A673 (cell line): ENCODE measurements at regions of chr2 and their contacts with region 1.

Region 1: GRCh38 chr2:159615140-159615951 is 1.0 kb downstream of the BAZ2B start:
- DNase-seq: peak; percentile 95
- H3K4me3 ChIP-seq: peak overlapping the region; percentile 83
- H3K27ac ChIP-seq: peak overlapping the region; percentile 100
- H3K4me1 ChIP-seq: peaks cover 50% of the 10 kb centered on the region
- H3K27me3 ChIP-seq: no peaks in the 10 kb centered on the region
- CTCF ChIP-seq: no peak

Region 2: DNA sequence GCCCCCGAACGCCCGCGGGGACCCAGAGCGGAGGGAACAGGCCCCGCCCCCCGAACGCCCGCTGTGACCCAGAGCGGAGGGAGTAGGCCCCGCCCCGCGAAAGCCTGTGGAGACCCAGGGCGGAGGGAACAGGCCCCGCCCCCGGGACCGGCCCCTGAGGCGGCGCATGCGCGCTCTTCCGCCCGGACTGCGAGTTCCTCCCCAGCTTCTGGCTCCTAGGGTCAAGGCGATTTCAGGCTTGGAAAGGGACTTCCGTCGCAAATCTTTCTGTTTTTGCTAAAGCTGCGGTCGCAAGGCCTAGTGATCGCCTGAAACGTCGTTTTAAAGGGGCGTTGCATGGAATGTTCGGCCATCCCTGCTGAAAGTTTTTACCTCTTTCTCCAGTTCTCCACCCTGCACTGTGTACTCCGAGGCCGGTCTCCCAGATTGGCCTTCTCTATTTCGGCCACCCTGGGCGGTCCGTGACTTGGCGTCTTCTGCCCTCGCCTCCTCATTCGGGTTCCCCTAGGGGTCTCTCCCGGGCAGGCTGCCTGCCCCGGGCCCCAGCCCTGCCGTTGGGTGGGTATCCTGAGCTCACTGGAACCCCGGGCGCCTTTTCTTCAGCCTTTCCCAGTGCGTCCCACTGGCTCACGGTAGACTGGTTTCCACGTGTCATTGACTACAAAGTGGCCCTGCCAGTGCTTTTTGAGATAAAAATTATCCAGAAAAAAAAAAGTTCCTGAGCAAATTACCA is 328.5 kb before region 1 on chr2:
- CTCF ChIA-PET with region 1: no interaction called
- POLR2A ChIA-PET with region 1: interaction called, 3 read pairs
- intact Hi-C with region 1: loop called (anchors 10 kb)
- DNase-seq: peak; percentile 97
- H3K4me3 ChIP-seq: peak overlapping the region; percentile 98
- H3K27ac ChIP-seq: peak overlapping the region; percentile 69
- H3K4me1 ChIP-seq: peaks cover 22% of the 10 kb centered on the region
- H3K27me3 ChIP-seq: no peaks in the 10 kb centered on the region
- CTCF ChIP-seq: no peak

Region 3: DNA sequence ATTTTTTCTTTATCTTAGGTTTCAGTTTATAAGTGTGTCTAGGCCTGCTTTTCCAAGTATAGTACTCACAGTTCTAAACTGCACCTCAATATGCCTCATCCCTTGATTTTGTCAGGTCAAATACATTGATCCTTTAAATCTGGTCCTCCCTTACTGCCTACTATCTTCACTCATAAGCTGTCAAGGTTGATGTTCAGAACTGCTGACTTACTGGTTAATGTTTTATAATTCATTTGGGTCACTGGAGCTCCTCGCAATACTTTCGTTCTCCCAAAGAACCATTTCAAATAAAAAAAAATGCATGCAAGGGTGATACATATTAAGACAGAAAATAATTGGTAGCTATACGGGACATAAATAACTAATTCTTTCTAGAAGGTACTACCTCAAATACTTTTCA is 55.7 kb after region 1 on chr2:
- CTCF ChIA-PET with region 1: no interaction called
- POLR2A ChIA-PET with region 1: no interaction called
- intact Hi-C with region 1: no loop called
- DNase-seq: no peak
- H3K4me3 ChIP-seq: no peak overlapping the region
- H3K27ac ChIP-seq: no peak overlapping the region
- H3K4me1 ChIP-seq: peaks cover 5% of the 10 kb centered on the region
- H3K27me3 ChIP-seq: no peaks in the 10 kb centered on the region
- CTCF ChIP-seq: no peak

Region 4: GRCh38 chr2:159712143-159712928 is 97.0 kb after region 1 on chr2 and contains the start of gene MARCHF7:
- CTCF ChIA-PET with region 1: no interaction called
- POLR2A ChIA-PET with region 1: no interaction called
- intact Hi-C with region 1: loop called (anchors 2 kb)
- DNase-seq: peak; percentile 98
- H3K4me3 ChIP-seq: peak within 1 kb of the TSS; percentile 97
- H3K27ac ChIP-seq: peak within 1 kb of the TSS; percentile 99
- H3K4me1 ChIP-seq: peaks cover 16% of the 10 kb centered on the region
- H3K27me3 ChIP-seq: no peaks in the 10 kb centered on the region
- CTCF ChIP-seq: peak; percentile 67
- total RNA-seq, gene MARCHF7: 94.9 and 99.9 TPM in 2 replicates